SK-N-SH (cell line): ENCODE measurements at regions of chr1 and their contacts with region 1.

Region 1: GRCh38 chr1:56578963-56579875 is at the start of gene PLPP3:
- DNase-seq: peak; percentile 81
- H3K4me3 ChIP-seq: peak within 1 kb of the TSS; percentile 87 to 95
- H3K27ac ChIP-seq: peak within 1 kb of the TSS; percentile 81 to 98
- H3K4me1 ChIP-seq: peaks cover 0 to 11% of the 10 kb centered on the region in 2 experiments; a peak in 2 of 4 replicates
- H3K27me3 ChIP-seq: no peaks in the 10 kb centered on the region
- CTCF ChIP-seq: peak; percentile 70
- EP300 ChIP-seq: no peak; a peak in 2 of 4 replicates
- RAD21 ChIP-seq: peak; percentile 68
- polyA plus RNA-seq, gene PLPP3: 32.2 and 38.1 TPM in 2 replicates

Region 2: DNA sequence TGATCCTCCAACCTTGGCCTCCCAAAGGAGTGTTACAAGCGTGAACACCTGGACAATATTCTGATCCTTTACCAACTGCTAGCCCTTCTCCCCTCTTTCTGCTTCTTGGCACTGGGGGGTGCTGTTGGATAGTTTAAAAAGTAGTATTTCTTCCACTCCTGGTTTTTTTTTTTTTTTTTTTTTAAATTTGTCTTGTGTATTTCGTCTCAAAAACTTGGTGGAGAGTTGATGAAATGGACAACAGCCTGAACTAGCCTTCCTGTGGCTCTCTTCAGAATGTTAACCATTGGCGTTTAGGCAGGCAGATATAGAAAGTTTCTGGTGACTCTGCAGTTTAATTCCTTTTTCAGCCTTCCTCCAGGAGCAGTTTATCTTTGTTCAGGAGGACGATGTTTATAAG is 1294.4 kb before region 1 on chr1:
- CTCF ChIA-PET with region 1: interaction called, 70 read pairs
- POLR2A ChIA-PET with region 1: no interaction called
- DNase-seq: peak; percentile 36
- H3K4me3 ChIP-seq: no peak overlapping the region
- H3K27ac ChIP-seq: peak overlapping the region in 1 of 2 experiments; percentile 82; a peak in 2 of 4 replicates
- H3K4me1 ChIP-seq: peaks cover 3 to 4% of the 10 kb centered on the region in 2 experiments; a peak in 3 of 4 replicates
- H3K27me3 ChIP-seq: no peaks in the 10 kb centered on the region
- CTCF ChIP-seq: peak; percentile 78
- EP300 ChIP-seq: 0 out of 4 replicates have a peak, but pooled peaks of 1 of the 2 experiments have one; percentile 29
- RAD21 ChIP-seq: peak; percentile 84

Region 3: GRCh38 chr1:56561227-56562019 is 17.8 kb before region 1 on chr1:
- CTCF ChIA-PET with region 1: interaction called, 21 read pairs
- POLR2A ChIA-PET with region 1: no interaction called
- DNase-seq: no peak
- H3K4me3 ChIP-seq: no peak overlapping the region
- H3K27ac ChIP-seq: no peak overlapping the region
- H3K4me1 ChIP-seq: peaks cover 0 to 20% of the 10 kb centered on the region in 2 experiments; a peak in 2 of 4 replicates
- H3K27me3 ChIP-seq: no peaks in the 10 kb centered on the region
- CTCF ChIP-seq: no peak
- EP300 ChIP-seq: no peak
- RAD21 ChIP-seq: no peak